Mammary epithelial cell (primary cell): ENCODE measurements at regions of chr12 and their contacts with region 1.

Region 1: GRCh38 chr12:132367071-132367851 is 37.9 kb upstream of the GALNT9 start:
- DNase-seq: no peak
- H3K4me3 ChIP-seq: no peak overlapping the region
- H3K27ac ChIP-seq: no peak overlapping the region
- H3K4me1 ChIP-seq: no peaks in the 10 kb centered on the region
- H3K27me3 ChIP-seq: no peaks in the 10 kb centered on the region
- CTCF ChIP-seq: no peak

Region 2: GRCh38 chr12:132284071-132284826 is 83.0 kb before region 1 on chr12:
- CTCF ChIA-PET with region 1: no interaction called
- dilution Hi-C with region 1: loop called (anchors 5 kb)
- in situ Hi-C with region 1: no loop called
- intact Hi-C with region 1: no loop called
- DNase-seq: no peak
- H3K4me3 ChIP-seq: no peak overlapping the region
- H3K27ac ChIP-seq: no peak overlapping the region
- H3K4me1 ChIP-seq: peaks cover 12% of the 10 kb centered on the region
- H3K27me3 ChIP-seq: no peaks in the 10 kb centered on the region
- CTCF ChIP-seq: peak in 1 of 2 donors; percentile 42

Region 3: GRCh38 chr12:132414634-132415326 is 47.5 kb after region 1 on chr12:
- CTCF ChIA-PET with region 1: no interaction called
- dilution Hi-C with region 1: no loop called
- in situ Hi-C with region 1: no loop called
- intact Hi-C with region 1: no loop called
- DNase-seq: peak; percentile 57
- H3K4me3 ChIP-seq: no peak overlapping the region
- H3K27ac ChIP-seq: no peak overlapping the region
- H3K4me1 ChIP-seq: no peaks in the 10 kb centered on the region
- H3K27me3 ChIP-seq: peaks cover 3% of the 10 kb centered on the region
- CTCF ChIP-seq: peak; percentile 58 to 97

Region 4: GRCh38 chr12:132445884-132446632 is 78.8 kb after region 1 on chr12:
- CTCF ChIA-PET with region 1: no interaction called
- dilution Hi-C with region 1: loop called (anchors 10 kb)
- in situ Hi-C with region 1: no loop called
- intact Hi-C with region 1: no loop called
- DNase-seq: no peak
- H3K4me3 ChIP-seq: peak overlapping the region; percentile 4 to 45 (median 38)
- H3K27ac ChIP-seq: peak overlapping the region; percentile 30
- H3K4me1 ChIP-seq: peaks cover 3% of the 10 kb centered on the region
- H3K27me3 ChIP-seq: no peaks in the 10 kb centered on the region
- CTCF ChIP-seq: no peak